Breast epithelium (tissue), 4 donors: ENCODE measurements at regions of chr2 and their contacts with region 1.

Region 1: DNA sequence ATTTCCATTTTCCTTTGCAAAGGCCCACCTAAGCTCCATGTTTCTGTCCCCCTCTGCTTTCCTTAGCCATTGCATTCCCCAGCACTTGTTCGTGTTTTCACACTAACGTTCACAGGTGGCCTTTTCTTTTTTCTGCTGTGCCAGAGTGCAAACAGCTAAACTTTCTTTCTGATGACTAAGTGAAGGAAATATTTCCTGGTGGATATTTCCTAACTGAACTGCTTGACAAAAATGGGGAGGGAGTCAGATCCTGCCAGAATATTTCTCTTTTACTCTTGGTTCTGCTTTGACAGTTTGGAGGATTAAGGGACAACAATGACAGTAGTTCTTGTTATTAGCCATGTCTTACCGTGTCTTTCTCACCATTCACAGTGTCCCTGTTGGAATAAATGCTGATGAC is 344.0 kb downstream of the ARHGAP15 start:
- DNase-seq: no peak
- H3K4me3 ChIP-seq: no peak overlapping the region
- H3K27ac ChIP-seq: no peak overlapping the region
- H3K4me1 ChIP-seq: no peaks in the 10 kb centered on the region
- H3K27me3 ChIP-seq: no peaks in the 10 kb centered on the region
- CTCF ChIP-seq: no peak
- POLR2A ChIP-seq: no peak

Region 2: GRCh38 chr2:144989579-144990270 is 1516.5 kb after region 1 on chr2:
- intact Hi-C with region 1: loop called (anchors 5 kb)
- DNase-seq: no peak
- H3K4me3 ChIP-seq: no peak overlapping the region
- H3K27ac ChIP-seq: no peak overlapping the region
- H3K4me1 ChIP-seq: no peaks in the 10 kb centered on the region
- H3K27me3 ChIP-seq: no peaks in the 10 kb centered on the region
- CTCF ChIP-seq: no peak
- POLR2A ChIP-seq: no peak